B cell (primary cell): ENCODE measurements at regions of chr2 and their contacts with region 1.

Region 1: GRCh38 chr2:143034292-143035074 is 94.7 kb upstream of the ARHGAP15 start:
- DNase-seq: peak; percentile 85
- ATAC-seq: peak; percentile 97
- H3K4me3 ChIP-seq: no peak overlapping the region
- H3K4me3 Mint-ChIP-seq: no peak overlapping the region
- H3K27ac ChIP-seq: no peak overlapping the region
- H3K27ac Mint-ChIP-seq: no peak overlapping the region
- H3K4me1 ChIP-seq: peaks cover 10 to 11% of the 10 kb centered on the region in 2 donors
- H3K4me1 Mint-ChIP-seq: peaks cover 9% of the 10 kb centered on the region
- H3K27me3 ChIP-seq: no peaks in the 10 kb centered on the region
- H3K27me3 Mint-ChIP-seq: no peaks in the 10 kb centered on the region
- CTCF ChIP-seq: peak; percentile 99

Region 2: DNA sequence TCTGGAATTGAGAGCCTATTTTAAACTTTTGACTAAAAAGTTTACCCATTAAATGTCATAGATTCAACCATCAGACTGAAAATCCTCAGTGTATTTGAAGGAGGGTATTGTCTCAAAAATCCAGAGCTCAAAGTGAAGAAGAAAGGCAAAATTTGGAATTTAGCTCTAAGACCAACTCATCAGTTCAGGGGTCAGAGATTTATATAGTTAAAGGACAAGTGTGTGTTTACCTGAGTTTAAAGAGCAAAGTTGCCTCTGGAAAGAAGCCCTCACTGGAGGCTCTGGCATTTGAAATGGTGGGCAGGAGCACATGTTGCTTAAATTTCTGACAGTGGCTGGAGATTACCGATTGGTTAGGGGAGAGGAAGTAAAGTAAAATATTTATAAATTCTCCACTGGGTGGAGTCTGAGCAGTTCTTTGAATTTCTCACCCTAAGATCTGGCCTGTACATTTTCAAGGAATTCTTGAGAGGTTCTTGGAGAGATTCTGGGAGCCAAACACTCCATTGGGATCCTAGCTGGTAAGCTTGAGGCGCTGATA is 157.2 kb before region 1 on chr2 and contains the start of gene KYNU:
- CTCF ChIA-PET with region 1: interaction called, 3 read pairs
- POLR2A ChIA-PET with region 1: no interaction called
- intact Hi-C with region 1: loop called (anchors 5 kb)
- DNase-seq: peak; percentile 70
- ATAC-seq: peak; percentile 77
- H3K4me3 ChIP-seq: peak within 1 kb of the TSS; percentile 53 to 80 (median 61)
- H3K4me3 Mint-ChIP-seq: peak within 1 kb of the TSS; percentile 91
- H3K27ac ChIP-seq: peak within 1 kb of the TSS; percentile 84 to 85
- H3K27ac Mint-ChIP-seq: peak within 1 kb of the TSS; percentile 91
- H3K4me1 ChIP-seq: peaks cover 49 to 55% of the 10 kb centered on the region in 2 donors
- H3K4me1 Mint-ChIP-seq: peaks cover 72% of the 10 kb centered on the region
- H3K27me3 ChIP-seq: no peaks in the 10 kb centered on the region
- H3K27me3 Mint-ChIP-seq: no peaks in the 10 kb centered on the region
- CTCF ChIP-seq: peak; percentile 49
- total RNA-seq, gene KYNU: 46.2 and 50.4 TPM in 2 replicates

Region 3: GRCh38 chr2:143051465-143051864 is 17.0 kb after region 1 on chr2:
- CTCF ChIA-PET with region 1: interaction called, 18 read pairs
- POLR2A ChIA-PET with region 1: no interaction called
- intact Hi-C with region 1: no loop called
- DNase-seq: no peak
- ATAC-seq: no peak
- H3K4me3 ChIP-seq: no peak overlapping the region
- H3K4me3 Mint-ChIP-seq: no peak overlapping the region
- H3K27ac ChIP-seq: no peak overlapping the region
- H3K27ac Mint-ChIP-seq: no peak overlapping the region
- H3K4me1 ChIP-seq: no peaks in the 10 kb centered on the region
- H3K4me1 Mint-ChIP-seq: no peaks in the 10 kb centered on the region
- H3K27me3 ChIP-seq: no peaks in the 10 kb centered on the region
- H3K27me3 Mint-ChIP-seq: no peaks in the 10 kb centered on the region
- CTCF ChIP-seq: no peak

Region 4: DNA sequence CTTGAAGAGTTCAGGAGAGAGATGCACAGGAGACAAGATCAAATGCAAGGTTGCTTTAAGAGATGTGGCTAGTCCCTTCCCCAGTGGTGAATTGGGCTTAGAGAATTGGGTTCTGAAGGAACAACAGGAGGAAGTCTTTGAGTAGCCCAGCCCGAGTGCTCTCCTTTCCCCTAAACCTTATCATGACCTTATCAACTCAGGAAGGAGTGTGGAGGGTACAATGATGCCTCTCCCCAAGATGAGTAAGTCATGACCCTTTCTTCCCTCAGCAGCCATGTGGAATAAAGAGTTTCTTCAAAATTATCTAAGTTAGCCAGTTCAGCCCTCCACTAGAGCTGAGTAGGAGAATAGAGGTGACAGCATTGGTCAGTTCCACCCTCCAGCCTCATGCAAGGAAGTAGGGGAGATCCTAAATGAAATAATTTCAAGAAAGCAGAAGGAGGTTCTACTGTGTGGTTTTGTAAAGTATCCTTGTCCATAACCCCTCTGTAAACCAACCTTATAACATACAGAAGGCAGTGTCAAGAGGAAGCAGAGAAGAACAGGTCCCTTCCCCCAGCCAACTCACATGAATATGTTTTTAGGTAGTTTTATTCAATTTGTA is 183.1 kb after region 1 on chr2:
- CTCF ChIA-PET with region 1: interaction called, 18 read pairs
- POLR2A ChIA-PET with region 1: no interaction called
- intact Hi-C with region 1: loop called (anchors 1 kb)
- DNase-seq: no peak
- ATAC-seq: peak; percentile 17
- H3K4me3 ChIP-seq: no peak overlapping the region
- H3K4me3 Mint-ChIP-seq: no peak overlapping the region
- H3K27ac ChIP-seq: peak overlapping the region in 1 of 2 donors; percentile 57
- H3K27ac Mint-ChIP-seq: peak overlapping the region; percentile 84
- H3K4me1 ChIP-seq: no peaks in the 10 kb centered on the region
- H3K4me1 Mint-ChIP-seq: peaks cover 16% of the 10 kb centered on the region
- H3K27me3 ChIP-seq: no peaks in the 10 kb centered on the region
- H3K27me3 Mint-ChIP-seq: no peaks in the 10 kb centered on the region
- CTCF ChIP-seq: no peak

Region 5: DNA sequence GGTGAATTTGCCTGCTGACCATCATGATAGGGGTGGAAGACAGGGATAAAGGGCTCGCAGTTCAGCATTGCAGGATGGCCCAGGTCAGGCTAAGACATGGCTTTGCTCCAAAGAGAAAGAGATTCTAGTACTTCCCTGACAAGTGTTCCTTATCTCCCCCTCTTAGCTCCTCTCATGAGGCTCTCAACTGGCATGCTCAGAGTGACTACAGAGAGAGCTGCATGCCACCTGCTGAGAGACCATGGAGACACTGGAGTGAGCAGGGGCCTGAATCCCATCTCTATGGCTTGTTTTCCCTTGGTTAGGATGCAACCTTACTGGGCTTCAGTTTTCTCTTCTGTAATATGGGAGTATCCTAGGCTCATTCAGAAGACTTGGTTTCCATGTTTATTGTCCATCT is 189.1 kb after region 1 on chr2:
- CTCF ChIA-PET with region 1: interaction called, 18 read pairs
- POLR2A ChIA-PET with region 1: no interaction called
- intact Hi-C with region 1: loop called (anchors 1 kb)
- DNase-seq: no peak
- ATAC-seq: no peak
- H3K4me3 ChIP-seq: no peak overlapping the region
- H3K4me3 Mint-ChIP-seq: no peak overlapping the region
- H3K27ac ChIP-seq: no peak overlapping the region
- H3K27ac Mint-ChIP-seq: no peak overlapping the region
- H3K4me1 ChIP-seq: no peaks in the 10 kb centered on the region
- H3K4me1 Mint-ChIP-seq: peaks cover 15% of the 10 kb centered on the region
- H3K27me3 ChIP-seq: no peaks in the 10 kb centered on the region
- H3K27me3 Mint-ChIP-seq: no peaks in the 10 kb centered on the region
- CTCF ChIP-seq: no peak

Region 6: DNA sequence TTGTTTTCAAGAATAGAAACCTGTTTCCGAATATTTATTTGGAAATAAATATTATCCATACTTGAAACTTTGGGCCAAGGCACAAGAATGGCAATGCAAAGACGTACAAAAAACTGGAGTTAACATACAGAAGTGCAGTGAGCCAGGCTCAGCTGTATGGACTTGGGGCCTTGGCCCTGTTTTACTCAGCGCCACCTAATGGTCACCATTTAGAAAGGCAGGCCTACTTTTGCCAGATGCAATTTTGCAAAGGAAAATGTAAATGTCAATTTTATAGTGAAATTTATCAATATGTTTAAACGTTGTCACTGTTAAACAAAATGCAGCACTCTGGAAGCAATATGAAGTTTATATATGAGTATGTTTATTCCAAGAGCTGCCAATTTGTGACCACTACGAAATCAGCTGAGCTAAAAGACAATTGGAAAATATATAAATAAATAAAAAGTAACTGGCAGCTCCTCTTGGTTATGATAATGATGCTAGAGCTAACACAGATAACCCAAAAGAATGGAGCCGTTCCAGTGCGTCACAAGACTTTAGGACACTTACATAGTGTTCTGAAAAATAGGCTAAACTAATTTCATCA is 249.7 kb after region 1 on chr2:
- CTCF ChIA-PET with region 1: interaction called, 10 read pairs
- POLR2A ChIA-PET with region 1: no interaction called
- intact Hi-C with region 1: loop called (anchors 1 kb)
- DNase-seq: peak; percentile 62
- ATAC-seq: peak; percentile 80
- H3K4me3 ChIP-seq: no peak overlapping the region
- H3K4me3 Mint-ChIP-seq: no peak overlapping the region
- H3K27ac ChIP-seq: no peak overlapping the region
- H3K27ac Mint-ChIP-seq: no peak overlapping the region
- H3K4me1 ChIP-seq: no peaks in the 10 kb centered on the region
- H3K4me1 Mint-ChIP-seq: peaks cover 16% of the 10 kb centered on the region
- H3K27me3 ChIP-seq: no peaks in the 10 kb centered on the region
- H3K27me3 Mint-ChIP-seq: no peaks in the 10 kb centered on the region
- CTCF ChIP-seq: peak; percentile 93

Region 7: GRCh38 chr2:143433251-143433650 is 398.8 kb after region 1 on chr2:
- CTCF ChIA-PET with region 1: no interaction called
- POLR2A ChIA-PET with region 1: no interaction called
- intact Hi-C with region 1: no loop called
- DNase-seq: no peak
- ATAC-seq: no peak
- H3K4me3 ChIP-seq: no peak overlapping the region
- H3K4me3 Mint-ChIP-seq: no peak overlapping the region
- H3K27ac ChIP-seq: no peak overlapping the region
- H3K27ac Mint-ChIP-seq: no peak overlapping the region
- H3K4me1 ChIP-seq: no peaks in the 10 kb centered on the region
- H3K4me1 Mint-ChIP-seq: peaks cover 11% of the 10 kb centered on the region
- H3K27me3 ChIP-seq: no peaks in the 10 kb centered on the region
- H3K27me3 Mint-ChIP-seq: no peaks in the 10 kb centered on the region
- CTCF ChIP-seq: no peak